Mammary epithelial cell (primary cell): ENCODE measurements at regions of chr16 and their contacts with region 1.

Region 1: DNA sequence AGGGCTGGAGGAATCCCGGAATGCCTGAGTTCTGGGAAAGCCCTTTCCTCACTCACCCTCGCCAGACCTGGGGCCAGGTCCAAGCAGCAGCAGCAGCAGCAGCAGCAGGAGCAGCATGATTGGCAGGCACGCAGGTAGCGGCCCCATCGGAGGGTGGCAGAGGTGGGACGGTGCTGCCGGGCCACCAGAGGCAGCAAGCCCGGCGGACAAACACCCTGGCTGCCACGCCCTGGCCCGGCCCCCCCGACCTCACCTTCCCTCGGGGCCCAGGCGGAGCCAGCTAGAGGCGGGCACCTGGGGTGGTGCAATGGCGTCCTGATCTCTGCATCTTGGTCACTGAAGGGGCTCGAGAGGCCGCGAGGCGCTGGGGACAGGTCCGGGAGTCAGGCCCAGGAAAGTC is 122.4 kb downstream of the LAT start:
- DNase-seq: no peak
- H3K4me3 ChIP-seq: no peak overlapping the region
- H3K27ac ChIP-seq: no peak overlapping the region
- H3K4me1 ChIP-seq: no peaks in the 10 kb centered on the region
- H3K27me3 ChIP-seq: no peaks in the 10 kb centered on the region
- CTCF ChIP-seq: no peak

Region 2: DNA sequence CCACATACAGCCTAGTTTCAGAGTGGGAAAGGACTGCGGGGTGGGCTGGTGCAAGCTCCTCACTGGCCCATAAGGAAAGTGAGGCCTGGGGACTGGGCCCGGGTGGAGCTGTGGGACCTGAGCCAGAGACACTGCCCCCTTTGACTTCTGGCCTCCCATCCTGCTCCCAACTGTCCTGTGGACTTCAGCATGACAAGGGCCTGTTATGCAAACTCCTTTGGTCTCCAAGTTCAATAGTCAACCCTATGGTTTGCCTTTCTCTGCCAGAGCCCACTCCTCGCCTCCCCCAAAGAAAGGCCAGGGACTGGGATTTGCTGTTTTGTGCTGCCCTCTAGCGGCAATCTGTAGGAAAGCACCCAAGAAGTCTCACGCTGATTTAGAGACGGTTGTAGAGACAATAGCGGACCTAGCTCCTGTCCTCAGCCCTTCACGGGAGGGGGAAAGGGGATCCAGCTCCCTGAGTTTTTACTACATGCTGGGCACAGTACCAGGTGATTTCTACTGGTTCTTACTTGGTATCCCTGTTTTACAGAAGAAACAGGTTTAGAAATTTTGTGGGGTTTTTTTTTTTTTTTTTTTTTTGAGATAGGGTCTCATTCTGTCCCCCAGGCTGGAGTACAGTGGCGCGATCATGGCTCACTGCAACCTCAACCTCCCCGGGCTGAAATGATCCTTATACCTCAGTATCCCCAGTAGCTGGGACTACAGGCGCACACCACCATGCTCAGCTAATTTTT is 925.0 kb after region 1 on chr16:
- CTCF ChIA-PET with region 1: no interaction called
- dilution Hi-C with region 1: no loop called
- in situ Hi-C with region 1: loop called in 1 of 2 experiments (anchors 25 kb)
- intact Hi-C with region 1: no loop called
- DNase-seq: peak; percentile 44
- H3K4me3 ChIP-seq: no peak overlapping the region
- H3K27ac ChIP-seq: no peak overlapping the region
- H3K4me1 ChIP-seq: no peaks in the 10 kb centered on the region
- H3K27me3 ChIP-seq: peaks cover 4% of the 10 kb centered on the region
- CTCF ChIP-seq: peak; percentile 68 to 80